ENCODE measurements at regions of chr11 and their contacts with region 1.

Region 1: GRCh38 chr11:127345819-127346459 is 345.4 kb upstream of the KIRREL3 start:
- DNase-seq: peak; percentile 9
- H3K4me3 ChIP-seq: no peak overlapping the region
- H3K27ac ChIP-seq: no peak overlapping the region
- H3K4me1 ChIP-seq: no peaks in the 10 kb centered on the region
- H3K27me3 ChIP-seq: no peaks in the 10 kb centered on the region
- CTCF ChIP-seq: peak; percentile 86

Region 2: GRCh38 chr11:126480410-126481302 is 865.3 kb before region 1 on chr11:
- CTCF ChIA-PET with region 1: interaction called, 3 read pairs
- dilution Hi-C with region 1: no loop called
- in situ Hi-C with region 1: no loop called
- intact Hi-C with region 1: loop called (anchors 5 kb)
- DNase-seq: peak; percentile 70
- H3K4me3 ChIP-seq: no peak overlapping the region
- H3K27ac ChIP-seq: no peak overlapping the region
- H3K4me1 ChIP-seq: peaks cover 4% of the 10 kb centered on the region
- H3K27me3 ChIP-seq: no peaks in the 10 kb centered on the region
- CTCF ChIP-seq: peak; percentile 94 to 97

Region 3: DNA sequence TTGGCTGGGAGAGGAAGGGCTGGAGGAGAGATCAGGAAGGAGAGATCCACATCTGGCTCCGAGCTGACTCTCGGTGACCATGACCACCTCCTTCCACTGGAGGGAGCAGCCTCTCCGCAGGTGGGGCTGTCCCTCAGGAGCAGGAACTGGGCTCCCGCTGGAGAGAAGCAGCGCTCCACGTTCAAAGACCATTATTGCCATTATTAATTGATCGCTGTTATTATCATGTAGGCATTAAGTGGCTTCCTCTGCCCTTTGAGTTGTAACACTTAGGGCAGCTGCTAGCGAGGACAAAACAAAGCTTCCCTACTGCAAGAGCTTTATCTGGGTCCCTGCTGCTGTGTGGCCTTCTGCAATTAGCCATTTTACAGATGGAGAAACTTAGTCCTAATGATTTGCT is 738.6 kb before region 1 on chr11:
- CTCF ChIA-PET with region 1: no interaction called
- dilution Hi-C with region 1: no loop called
- in situ Hi-C with region 1: no loop called
- intact Hi-C with region 1: loop called (anchors 1 kb)
- DNase-seq: peak; percentile 39
- H3K4me3 ChIP-seq: no peak overlapping the region
- H3K27ac ChIP-seq: no peak overlapping the region
- H3K4me1 ChIP-seq: no peaks in the 10 kb centered on the region
- H3K27me3 ChIP-seq: no peaks in the 10 kb centered on the region
- CTCF ChIP-seq: peak; percentile 84 to 97

Region 4: GRCh38 chr11:127862406-127862805 is 516.5 kb after region 1 on chr11:
- CTCF ChIA-PET with region 1: no interaction called
- dilution Hi-C with region 1: no loop called
- in situ Hi-C with region 1: no loop called
- intact Hi-C with region 1: no loop called
- DNase-seq: peak; percentile 73
- H3K4me3 ChIP-seq: no peak overlapping the region
- H3K27ac ChIP-seq: peak overlapping the region; percentile 80
- H3K4me1 ChIP-seq: peaks cover 24% of the 10 kb centered on the region
- H3K27me3 ChIP-seq: no peaks in the 10 kb centered on the region
- CTCF ChIP-seq: no peak